ENCODE measurements at regions of chr11 and their contacts with region 1.

Region 1: GRCh38 chr11:34492806-34493414 is 20.7 kb downstream of the ELF5 start:
- ATAC-seq: peak in 5 of 8 experiments; percentile 44 to 72 (median 66)
- H3K4me3 ChIP-seq: no peak overlapping the region
- H3K27ac ChIP-seq: no peak overlapping the region
- H3K4me1 ChIP-seq: no peaks in the 10 kb centered on the region

Region 2: GRCh38 chr11:34366522-34366921 is 126.4 kb before region 1 on chr11:
- in situ Hi-C with region 1: loop called in 3 of 9 experiments (anchors 10 to 25 kb)
- ATAC-seq: no peak
- H3K4me3 ChIP-seq: no peak overlapping the region
- H3K27ac ChIP-seq: no peak overlapping the region
- H3K4me1 ChIP-seq: peaks cover 4 to 8% of the 10 kb centered on the region in 2 donors